Naive thymus-derived CD4-positive, alpha-beta T cell (primary cell): ENCODE measurements at regions of chr6 and their contacts with region 1.

Region 1: GRCh38 chr6:157756708-157757429 is 66.2 kb upstream of the SNX9 start:
- DNase-seq: peak; percentile 57 to 79 (median 73)
- ATAC-seq: peak; percentile 72
- H3K4me3 ChIP-seq: no peak overlapping the region
- H3K4me3 Mint-ChIP-seq: peak overlapping the region in 9 of 10 donors; percentile 42 to 84 (median 72)
- H3K27ac ChIP-seq: no peak overlapping the region
- H3K27ac Mint-ChIP-seq: peak overlapping the region; percentile 27 to 98 (median 92)
- H3K4me1 ChIP-seq: peaks cover 12 to 55% of the 10 kb centered on the region in 2 donors
- H3K4me1 Mint-ChIP-seq: peaks cover 42 to 83% (median 75%) of the 10 kb centered on the region in 7 donors
- H3K27me3 ChIP-seq: no peaks in the 10 kb centered on the region
- H3K27me3 Mint-ChIP-seq: peaks cover 0 to 42% (median 0%) of the 10 kb centered on the region in 5 donors

Region 2: GRCh38 chr6:157443066-157443800 is 313.6 kb before region 1 on chr6:
- CTCF ChIA-PET with region 1: no interaction called
- POLR2A ChIA-PET with region 1: no interaction called
- intact Hi-C with region 1: no loop called
- DNase-seq: no peak
- ATAC-seq: no peak
- H3K4me3 ChIP-seq: no peak overlapping the region
- H3K4me3 Mint-ChIP-seq: no peak overlapping the region
- H3K27ac ChIP-seq: no peak overlapping the region
- H3K27ac Mint-ChIP-seq: peak overlapping the region in 1 of 9 donors; percentile 51
- H3K4me1 ChIP-seq: no peaks in the 10 kb centered on the region
- H3K4me1 Mint-ChIP-seq: peaks cover 0 to 11% (median 0%) of the 10 kb centered on the region in 7 donors
- H3K27me3 ChIP-seq: no peaks in the 10 kb centered on the region
- H3K27me3 Mint-ChIP-seq: no peaks in the 10 kb centered on the region

Region 3: GRCh38 chr6:157667211-157668008 is 89.5 kb before region 1 on chr6:
- CTCF ChIA-PET with region 1: interaction called, 7 read pairs
- POLR2A ChIA-PET with region 1: no interaction called
- intact Hi-C with region 1: loop called in 1 of 2 experiments (anchors 5 kb)
- DNase-seq: peak in 8 of 9 donors; percentile 28 to 67 (median 54)
- ATAC-seq: peak; percentile 83
- H3K4me3 ChIP-seq: no peak overlapping the region
- H3K4me3 Mint-ChIP-seq: peak overlapping the region in 4 of 10 donors; percentile 1 to 35 (median 10)
- H3K27ac ChIP-seq: no peak overlapping the region
- H3K27ac Mint-ChIP-seq: peak overlapping the region in 7 of 9 donors; percentile 4 to 38 (median 19)
- H3K4me1 ChIP-seq: peaks cover 0 to 15% of the 10 kb centered on the region in 2 donors
- H3K4me1 Mint-ChIP-seq: peaks cover 7 to 31% (median 23%) of the 10 kb centered on the region in 7 donors
- H3K27me3 ChIP-seq: no peaks in the 10 kb centered on the region
- H3K27me3 Mint-ChIP-seq: peaks cover 0 to 6% (median 0%) of the 10 kb centered on the region in 5 donors

Region 4: DNA sequence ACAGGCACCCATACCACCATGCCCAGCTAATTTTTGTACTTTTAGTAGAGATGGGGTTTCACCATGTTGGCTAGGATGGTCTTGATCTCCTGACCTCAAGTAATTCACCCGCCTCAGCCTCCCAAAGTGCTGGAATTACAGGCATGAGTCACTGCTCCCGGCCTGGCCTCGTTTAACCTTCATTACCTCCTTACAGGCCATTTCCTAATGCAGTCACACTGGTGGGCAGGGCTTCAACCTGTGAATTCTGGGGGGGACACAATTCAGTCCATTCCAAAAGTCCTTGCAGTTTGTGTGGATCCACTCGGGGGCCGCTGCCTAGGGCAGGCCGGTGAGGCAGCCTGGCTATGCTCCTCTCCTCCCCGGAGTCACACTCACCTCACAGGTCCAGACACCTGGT is 46.3 kb before region 1 on chr6:
- CTCF ChIA-PET with region 1: no interaction called
- POLR2A ChIA-PET with region 1: no interaction called
- intact Hi-C with region 1: no loop called
- DNase-seq: no peak
- ATAC-seq: no peak
- H3K4me3 ChIP-seq: no peak overlapping the region
- H3K4me3 Mint-ChIP-seq: no peak overlapping the region
- H3K27ac ChIP-seq: no peak overlapping the region
- H3K27ac Mint-ChIP-seq: no peak overlapping the region
- H3K4me1 ChIP-seq: no peaks in the 10 kb centered on the region
- H3K4me1 Mint-ChIP-seq: peaks cover 0 to 1% (median 0%) of the 10 kb centered on the region in 7 donors
- H3K27me3 ChIP-seq: no peaks in the 10 kb centered on the region
- H3K27me3 Mint-ChIP-seq: no peaks in the 10 kb centered on the region

Region 5: GRCh38 chr6:157873735-157874344 is 117.0 kb after region 1 on chr6:
- CTCF ChIA-PET with region 1: interaction called, 53 read pairs
- POLR2A ChIA-PET with region 1: interaction called, 20 read pairs
- intact Hi-C with region 1: loop called (anchors 1 kb)
- DNase-seq: peak; percentile 65 to 84 (median 80)
- ATAC-seq: peak; percentile 87
- H3K4me3 ChIP-seq: no peak overlapping the region
- H3K4me3 Mint-ChIP-seq: peak overlapping the region in 2 of 10 donors; percentile 14 to 21
- H3K27ac ChIP-seq: no peak overlapping the region
- H3K27ac Mint-ChIP-seq: peak overlapping the region in 7 of 9 donors; percentile 26 to 87 (median 56)
- H3K4me1 ChIP-seq: peaks cover 0 to 25% of the 10 kb centered on the region in 2 donors
- H3K4me1 Mint-ChIP-seq: peaks cover 4 to 47% (median 44%) of the 10 kb centered on the region in 7 donors
- H3K27me3 ChIP-seq: no peaks in the 10 kb centered on the region
- H3K27me3 Mint-ChIP-seq: no peaks in the 10 kb centered on the region

Region 6: GRCh38 chr6:157885211-157885788 is 128.4 kb after region 1 on chr6:
- CTCF ChIA-PET with region 1: interaction called, 23 read pairs
- POLR2A ChIA-PET with region 1: interaction called, 5 read pairs
- intact Hi-C with region 1: loop called in 1 of 2 experiments (anchors 2 kb)
- DNase-seq: peak in 7 of 9 donors; percentile 74 to 90 (median 86)
- ATAC-seq: peak; percentile 89
- H3K4me3 ChIP-seq: no peak overlapping the region
- H3K4me3 Mint-ChIP-seq: peak overlapping the region; percentile 30 to 78 (median 54)
- H3K27ac ChIP-seq: peak overlapping the region; percentile 93
- H3K27ac Mint-ChIP-seq: peak overlapping the region; percentile 86 to 99 (median 96)
- H3K4me1 ChIP-seq: peaks cover 0 to 33% of the 10 kb centered on the region in 2 donors
- H3K4me1 Mint-ChIP-seq: peaks cover 31 to 92% (median 85%) of the 10 kb centered on the region in 7 donors
- H3K27me3 ChIP-seq: no peaks in the 10 kb centered on the region
- H3K27me3 Mint-ChIP-seq: peaks cover 0 to 3% (median 0%) of the 10 kb centered on the region in 5 donors

Region 7: DNA sequence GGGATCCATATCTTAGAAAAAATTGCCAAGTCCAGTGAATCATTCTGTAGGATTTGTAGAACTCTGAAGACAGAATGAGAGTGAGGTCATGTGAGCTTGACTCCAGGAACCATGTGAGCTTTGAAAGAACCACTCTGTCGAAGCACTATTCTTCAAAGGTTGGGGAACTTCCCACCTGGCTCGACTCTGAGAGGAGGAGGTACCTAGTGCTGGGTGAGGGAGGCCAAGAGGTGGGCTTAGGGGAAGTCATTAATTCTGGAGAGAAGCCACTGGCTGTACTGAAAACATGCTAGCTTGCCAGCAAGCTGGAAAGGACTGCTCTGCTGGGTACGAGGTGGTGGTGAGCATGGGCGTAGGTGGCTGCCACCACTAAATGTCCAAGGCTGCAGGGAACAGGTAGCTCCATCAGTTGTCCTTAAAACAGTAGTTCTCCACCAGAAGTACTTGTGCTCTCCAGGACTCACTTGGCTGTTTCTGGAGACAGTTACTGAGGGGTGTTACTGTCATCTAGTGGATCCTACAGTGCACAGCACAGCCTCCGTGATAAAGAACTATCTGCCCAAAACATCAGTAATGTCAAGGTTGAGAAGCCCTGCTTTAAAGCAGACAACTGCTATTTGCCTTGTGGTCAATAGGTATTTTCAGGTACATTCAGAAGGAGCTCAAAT is 190.1 kb after region 1 on chr6:
- CTCF ChIA-PET with region 1: no interaction called
- POLR2A ChIA-PET with region 1: interaction called, 4 read pairs
- intact Hi-C with region 1: loop called (anchors 1 kb)
- DNase-seq: peak in 6 of 9 donors; percentile 11 to 51 (median 32)
- ATAC-seq: peak; percentile 72
- H3K4me3 ChIP-seq: no peak overlapping the region
- H3K4me3 Mint-ChIP-seq: peak overlapping the region in 1 of 10 donors; percentile 42
- H3K27ac ChIP-seq: no peak overlapping the region
- H3K27ac Mint-ChIP-seq: peak overlapping the region in 8 of 9 donors; percentile 8 to 88 (median 52)
- H3K4me1 ChIP-seq: no peaks in the 10 kb centered on the region
- H3K4me1 Mint-ChIP-seq: peaks cover 0 to 24% (median 5%) of the 10 kb centered on the region in 7 donors
- H3K27me3 ChIP-seq: no peaks in the 10 kb centered on the region
- H3K27me3 Mint-ChIP-seq: peaks cover 0 to 20% (median 0%) of the 10 kb centered on the region in 5 donors

Region 8: GRCh38 chr6:158131926-158132325 is 375.1 kb after region 1 on chr6:
- CTCF ChIA-PET with region 1: no interaction called
- POLR2A ChIA-PET with region 1: no interaction called
- intact Hi-C with region 1: loop called in 1 of 2 experiments (anchors 5 kb)
- DNase-seq: peak in 1 of 9 donors; percentile 10
- ATAC-seq: peak; percentile 62
- H3K4me3 ChIP-seq: no peak overlapping the region
- H3K4me3 Mint-ChIP-seq: no peak overlapping the region
- H3K27ac ChIP-seq: no peak overlapping the region
- H3K27ac Mint-ChIP-seq: no peak overlapping the region
- H3K4me1 ChIP-seq: no peaks in the 10 kb centered on the region
- H3K4me1 Mint-ChIP-seq: no peaks in the 10 kb centered on the region
- H3K27me3 ChIP-seq: no peaks in the 10 kb centered on the region
- H3K27me3 Mint-ChIP-seq: no peaks in the 10 kb centered on the region